GM12878 (cell line): ENCODE measurements at regions of chr12 and their contacts with region 1.

Region 1: DNA sequence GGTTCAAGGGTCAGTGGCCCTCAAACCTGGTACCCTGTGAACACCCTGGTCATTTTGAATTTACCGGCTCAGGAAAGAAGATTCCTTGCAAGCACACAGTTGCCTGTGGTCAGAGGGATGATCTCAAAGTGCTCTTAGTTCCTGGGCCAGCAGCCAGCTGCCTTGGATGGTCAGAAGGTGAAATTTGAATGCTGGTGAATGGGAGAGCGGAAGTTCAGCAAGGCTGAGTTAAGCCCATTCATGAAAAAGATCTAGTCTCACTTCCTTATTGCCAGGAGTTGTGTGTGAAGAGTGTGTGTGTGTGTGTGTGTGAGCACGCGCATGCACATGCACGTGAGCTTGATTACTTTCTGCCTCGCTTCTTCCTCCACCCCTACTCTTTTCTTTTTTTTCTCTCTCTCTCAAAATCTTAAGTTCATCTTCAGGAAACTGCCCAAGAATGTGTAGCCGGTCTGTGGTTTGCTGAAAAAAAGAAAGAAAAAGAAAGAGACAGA is 155.5 kb upstream of the CCND2 start:
- DNase-seq: peak; percentile 89
- ATAC-seq: peak; percentile 54
- H3K4me3 ChIP-seq: peak overlapping the region; percentile 56
- H3K27ac ChIP-seq: peak overlapping the region; percentile 95
- H3K4me1 ChIP-seq: peaks cover 50% of the 10 kb centered on the region
- H3K27me3 ChIP-seq: no peaks in the 10 kb centered on the region
- CTCF ChIP-seq: no peak
- EP300 ChIP-seq: peak; percentile 83 to 94; a peak in 3 of 4 replicates
- POLR2A ChIP-seq: no peak
- RAD21 ChIP-seq: no peak

Region 2: GRCh38 chr12:3803865-3804472 is 314.1 kb before region 1 on chr12:
- CTCF ChIA-PET with region 1: no interaction called
- POLR2A ChIA-PET with region 1: no interaction called
- RAD21 ChIA-PET with region 1: no interaction called
- SMC1A ChIA-PET with region 1: no interaction called
- in situ Hi-C with region 1: no loop called
- intact Hi-C with region 1: no loop called
- DNase-seq: peak; percentile 23
- ATAC-seq: peak; percentile 98
- H3K4me3 ChIP-seq: no peak overlapping the region
- H3K27ac ChIP-seq: no peak overlapping the region
- H3K4me1 ChIP-seq: no peaks in the 10 kb centered on the region
- H3K27me3 ChIP-seq: no peaks in the 10 kb centered on the region
- CTCF ChIP-seq: peak; percentile 86 to 93 (median 91)
- EP300 ChIP-seq: no peak
- POLR2A ChIP-seq: no peak
- RAD21 ChIP-seq: peak; percentile 87

Region 3: GRCh38 chr12:4030929-4031702 is 86.9 kb before region 1 on chr12:
- CTCF ChIA-PET with region 1: no interaction called
- POLR2A ChIA-PET with region 1: no interaction called
- RAD21 ChIA-PET with region 1: no interaction called
- SMC1A ChIA-PET with region 1: no interaction called
- in situ Hi-C with region 1: no loop called
- intact Hi-C with region 1: no loop called
- DNase-seq: no peak
- ATAC-seq: peak; percentile 91
- H3K4me3 ChIP-seq: no peak overlapping the region
- H3K27ac ChIP-seq: no peak overlapping the region
- H3K4me1 ChIP-seq: no peaks in the 10 kb centered on the region
- H3K27me3 ChIP-seq: peaks cover 1 to 9% of the 10 kb centered on the region in 2 experiments
- CTCF ChIP-seq: no peak
- EP300 ChIP-seq: no peak
- POLR2A ChIP-seq: no peak
- RAD21 ChIP-seq: no peak

Region 4: GRCh38 chr12:4080213-4080612 is 37.9 kb before region 1 on chr12:
- CTCF ChIA-PET with region 1: no interaction called
- POLR2A ChIA-PET with region 1: no interaction called
- RAD21 ChIA-PET with region 1: no interaction called
- SMC1A ChIA-PET with region 1: no interaction called
- in situ Hi-C with region 1: no loop called
- intact Hi-C with region 1: no loop called
- DNase-seq: no peak
- ATAC-seq: no peak
- H3K4me3 ChIP-seq: no peak overlapping the region
- H3K27ac ChIP-seq: no peak overlapping the region
- H3K4me1 ChIP-seq: no peaks in the 10 kb centered on the region
- H3K27me3 ChIP-seq: 0 out of 4 replicates have a peak, but pooled peaks cover 0 to 3% of the 10 kb centered on the region in 2 experiments
- CTCF ChIP-seq: no peak
- EP300 ChIP-seq: no peak
- POLR2A ChIP-seq: no peak
- RAD21 ChIP-seq: no peak

Region 5: DNA sequence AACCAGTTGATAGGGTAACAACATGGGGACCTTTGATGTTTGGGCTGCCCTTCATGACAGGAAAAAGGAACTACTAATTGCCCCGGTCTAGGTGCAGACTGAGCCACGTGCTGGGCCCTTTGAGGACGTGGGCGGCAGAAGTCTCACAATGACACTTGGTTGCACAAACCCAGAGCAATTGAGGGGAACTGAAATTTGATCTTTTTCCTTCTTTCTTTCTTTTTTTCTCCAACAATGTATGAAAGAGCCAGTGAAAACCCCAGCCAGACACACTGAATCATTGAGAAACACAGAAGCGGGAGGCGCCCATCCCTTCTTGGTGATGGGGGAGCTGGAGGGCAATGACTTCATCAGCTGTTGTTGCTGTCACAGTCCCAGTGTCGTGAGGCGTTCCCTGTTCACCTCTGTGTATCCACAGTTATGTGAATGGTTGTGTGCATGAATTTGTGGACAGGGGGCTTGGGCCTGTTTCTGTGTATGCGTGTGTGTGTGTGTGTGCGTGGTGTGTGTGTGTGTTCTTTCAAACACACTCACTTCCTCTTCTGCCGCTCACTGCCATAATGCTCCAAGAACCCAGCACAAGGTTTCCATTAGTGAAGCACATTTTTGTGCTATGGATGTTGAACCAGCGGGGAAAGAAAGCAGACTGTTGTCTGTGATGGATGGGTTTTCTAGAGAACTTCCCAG is 18.0 kb after region 1 on chr12:
- CTCF ChIA-PET with region 1: interaction called, 256 read pairs
- POLR2A ChIA-PET with region 1: interaction called, 245 read pairs
- RAD21 ChIA-PET with region 1: interaction called, 360 read pairs
- SMC1A ChIA-PET with region 1: interaction called, 395 read pairs
- in situ Hi-C with region 1: no loop called
- intact Hi-C with region 1: loop called (anchors 1 kb)
- DNase-seq: peak; percentile 94
- ATAC-seq: peak; percentile 88
- H3K4me3 ChIP-seq: peak overlapping the region; percentile 55; the same call in 1 of the 2 replicates
- H3K27ac ChIP-seq: peak overlapping the region; percentile 64
- H3K4me1 ChIP-seq: peaks cover 65% of the 10 kb centered on the region
- H3K27me3 ChIP-seq: no peaks in the 10 kb centered on the region
- CTCF ChIP-seq: no peak
- EP300 ChIP-seq: peak; percentile 85 to 87; a peak in 3 of 4 replicates
- POLR2A ChIP-seq: no peak
- RAD21 ChIP-seq: no peak

Region 6: GRCh38 chr12:4164559-4165558 is 46.8 kb after region 1 on chr12:
- CTCF ChIA-PET with region 1: interaction called, 7 read pairs
- POLR2A ChIA-PET with region 1: interaction called, 7 read pairs
- RAD21 ChIA-PET with region 1: no interaction called
- SMC1A ChIA-PET with region 1: interaction called, 11 read pairs
- in situ Hi-C with region 1: no loop called
- intact Hi-C with region 1: no loop called
- DNase-seq: no peak
- ATAC-seq: peak; percentile 92
- H3K4me3 ChIP-seq: peak overlapping the region; percentile 55; the same call in 1 of the 2 replicates
- H3K27ac ChIP-seq: peak overlapping the region; percentile 59
- H3K4me1 ChIP-seq: peaks cover 21% of the 10 kb centered on the region
- H3K27me3 ChIP-seq: no peaks in the 10 kb centered on the region
- CTCF ChIP-seq: no peak
- EP300 ChIP-seq: no peak
- POLR2A ChIP-seq: peak; percentile 82
- RAD21 ChIP-seq: no peak

Region 7: DNA sequence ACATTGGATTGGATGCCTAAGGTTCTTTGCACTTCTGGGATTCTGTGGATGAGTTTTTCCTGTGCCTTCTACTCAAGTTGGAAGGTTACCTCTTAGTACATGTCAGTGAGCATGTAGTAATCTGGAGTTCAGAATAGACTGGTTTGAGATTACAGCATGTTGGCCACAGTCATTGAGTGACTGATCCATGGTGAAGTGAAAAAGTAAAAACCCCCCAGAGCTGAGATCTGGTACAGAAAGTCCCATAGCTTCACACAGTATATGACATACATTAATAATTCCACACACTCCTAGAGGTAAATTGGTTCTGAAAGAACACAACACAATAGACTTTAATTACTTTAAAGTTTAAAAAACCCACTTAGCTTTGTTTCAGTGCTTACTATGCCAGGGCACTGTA is 143.6 kb after region 1 on chr12:
- CTCF ChIA-PET with region 1: interaction called, 4 read pairs
- POLR2A ChIA-PET with region 1: interaction called, 5 read pairs
- RAD21 ChIA-PET with region 1: interaction called, 129 read pairs
- SMC1A ChIA-PET with region 1: interaction called, 13 read pairs
- in situ Hi-C with region 1: no loop called
- intact Hi-C with region 1: no loop called
- DNase-seq: peak; percentile 64
- ATAC-seq: peak; percentile 96
- H3K4me3 ChIP-seq: no peak overlapping the region
- H3K27ac ChIP-seq: peak overlapping the region; percentile 80
- H3K4me1 ChIP-seq: peaks cover 15% of the 10 kb centered on the region
- H3K27me3 ChIP-seq: no peaks in the 10 kb centered on the region
- CTCF ChIP-seq: no peak
- EP300 ChIP-seq: no peak
- POLR2A ChIP-seq: no peak
- RAD21 ChIP-seq: no peak

Region 8: DNA sequence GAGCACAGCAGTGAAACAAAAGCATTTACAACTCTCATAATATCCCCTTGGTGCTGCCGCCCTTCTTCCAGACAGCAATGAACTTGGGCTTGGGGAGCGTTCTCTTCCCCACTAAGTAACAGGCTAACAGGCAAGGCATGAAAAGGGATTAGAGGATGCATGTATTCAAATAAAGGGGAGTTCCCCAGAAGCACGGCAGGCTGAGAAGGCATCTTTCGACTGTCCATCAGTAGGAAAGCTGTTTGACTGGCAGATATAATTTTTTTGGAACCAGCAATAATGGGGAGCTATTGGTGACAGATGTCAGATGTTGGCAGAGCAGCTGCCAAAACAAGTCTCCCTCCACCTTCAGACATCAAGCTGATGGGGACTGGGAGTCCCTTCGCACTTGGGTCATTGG is 193.7 kb after region 1 on chr12:
- CTCF ChIA-PET with region 1: no interaction called
- POLR2A ChIA-PET with region 1: no interaction called
- RAD21 ChIA-PET with region 1: no interaction called
- SMC1A ChIA-PET with region 1: no interaction called
- in situ Hi-C with region 1: no loop called
- intact Hi-C with region 1: no loop called
- DNase-seq: no peak
- ATAC-seq: no peak
- H3K4me3 ChIP-seq: no peak overlapping the region
- H3K27ac ChIP-seq: no peak overlapping the region
- H3K4me1 ChIP-seq: peaks cover 6% of the 10 kb centered on the region; the same call in 1 of the 2 replicates
- H3K27me3 ChIP-seq: no peaks in the 10 kb centered on the region
- CTCF ChIP-seq: no peak
- EP300 ChIP-seq: no peak
- POLR2A ChIP-seq: no peak
- RAD21 ChIP-seq: no peak